HepG2 (cell line): ENCODE measurements at regions of chr2 and their contacts with region 1.

Region 1: GRCh38 chr2:42859006-42859552 is 66.7 kb upstream of the HAAO start:
- DNase-seq: peak; percentile 81
- ATAC-seq: no peak
- H3K4me3 ChIP-seq: no peak overlapping the region
- H3K27ac ChIP-seq: no peak overlapping the region
- H3K4me1 ChIP-seq: peaks cover 26% of the 10 kb centered on the region
- H3K27me3 ChIP-seq: peaks cover 2 to 16% of the 10 kb centered on the region in 2 experiments; a peak in 2 of 5 replicates
- CTCF ChIP-seq: peak; percentile 91
- EP300 ChIP-seq: 0 out of 4 replicates have a peak, but pooled peaks of 1 of the 2 experiments have one; percentile 3
- POLR2A ChIP-seq: no peak
- RAD21 ChIP-seq: peak; percentile 88

Region 2: GRCh38 chr2:42095923-42096408 is 763.1 kb before region 1 on chr2:
- CTCF ChIA-PET with region 1: no interaction called
- POLR2A ChIA-PET with region 1: no interaction called
- in situ Hi-C with region 1: no loop called
- intact Hi-C with region 1: no loop called
- DNase-seq: peak; percentile 81
- ATAC-seq: peak; percentile 20
- H3K4me3 ChIP-seq: no peak overlapping the region
- H3K27ac ChIP-seq: peak overlapping the region; percentile 1
- H3K4me1 ChIP-seq: peaks cover 86% of the 10 kb centered on the region
- H3K27me3 ChIP-seq: no peaks in the 10 kb centered on the region
- CTCF ChIP-seq: peak; percentile 88
- EP300 ChIP-seq: 0 out of 4 replicates have a peak, but pooled peaks of 1 of the 2 experiments have one; percentile 58
- POLR2A ChIP-seq: no peak
- RAD21 ChIP-seq: peak; percentile 88

Region 3: GRCh38 chr2:42810121-42810970 is 48.7 kb before region 1 on chr2:
- CTCF ChIA-PET with region 1: no interaction called
- POLR2A ChIA-PET with region 1: interaction called, 12 read pairs
- in situ Hi-C with region 1: no loop called
- intact Hi-C with region 1: no loop called
- DNase-seq: peak; percentile 94
- ATAC-seq: peak; percentile 84
- H3K4me3 ChIP-seq: peak overlapping the region; percentile 79 to 93 (median 80)
- H3K27ac ChIP-seq: peak overlapping the region; percentile 98
- H3K4me1 ChIP-seq: peaks cover 19% of the 10 kb centered on the region
- H3K27me3 ChIP-seq: no peaks in the 10 kb centered on the region; a peak in 2 of 5 replicates
- CTCF ChIP-seq: 0 out of 2 replicates have a peak, but pooled peaks have one; percentile 31
- EP300 ChIP-seq: peak; percentile 34 to 36; a peak in 2 of 4 replicates
- POLR2A ChIP-seq: peak; percentile 82 to 95
- RAD21 ChIP-seq: peak; percentile 52; the same call in 1 of the 2 replicates

Region 4: DNA sequence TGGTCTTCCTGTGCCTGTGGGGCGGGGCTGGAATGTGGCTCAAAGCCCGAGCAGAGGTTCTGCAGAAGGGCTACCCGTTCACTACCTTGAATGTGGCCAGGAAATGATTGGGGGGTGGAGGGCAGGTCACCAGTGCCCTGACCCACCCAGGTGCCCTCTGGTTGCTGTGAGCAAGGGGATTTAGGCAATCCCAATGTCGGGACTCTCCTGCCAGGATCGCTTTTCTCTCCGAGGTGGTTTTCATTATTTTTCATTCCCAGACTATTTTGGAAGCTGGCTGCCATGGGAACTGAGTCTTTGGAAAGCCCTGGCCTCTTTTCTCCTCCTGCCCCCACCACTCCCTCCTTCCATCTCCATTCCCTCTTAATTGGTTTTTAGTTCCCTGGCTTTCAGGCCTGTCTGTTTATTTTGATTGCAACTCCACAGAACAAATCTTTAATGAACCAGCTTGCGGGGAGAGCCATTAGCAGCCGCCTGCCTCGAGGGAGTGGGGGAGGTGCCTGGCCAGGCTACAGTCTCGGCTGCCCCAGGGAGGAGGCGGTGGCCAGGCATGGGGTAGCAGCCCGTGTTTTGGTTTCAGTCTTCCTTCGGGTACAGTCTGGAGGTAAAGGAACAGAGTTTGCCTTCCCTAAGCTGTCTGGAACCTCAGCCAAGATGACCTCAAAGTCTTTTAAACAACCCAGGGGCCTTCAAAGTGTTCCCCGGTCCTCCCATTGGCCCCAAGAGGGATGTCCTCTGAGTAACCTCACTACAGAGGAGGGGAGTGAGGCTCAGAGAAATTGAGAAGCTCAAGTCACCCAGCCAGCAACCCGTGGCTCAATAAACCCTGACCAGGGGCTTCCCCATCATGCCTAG is 47.7 kb after region 1 on chr2:
- CTCF ChIA-PET with region 1: no interaction called
- POLR2A ChIA-PET with region 1: interaction called, 6 read pairs
- in situ Hi-C with region 1: no loop called
- intact Hi-C with region 1: loop called (anchors 1 kb)
- DNase-seq: no peak
- ATAC-seq: peak; percentile 74
- H3K4me3 ChIP-seq: peak overlapping the region; percentile 49 to 62 (median 51)
- H3K27ac ChIP-seq: no peak overlapping the region
- H3K4me1 ChIP-seq: peaks cover 41% of the 10 kb centered on the region
- H3K27me3 ChIP-seq: peaks cover 9 to 69% of the 10 kb centered on the region in 2 experiments; a peak in 4 of 5 replicates
- CTCF ChIP-seq: no peak
- EP300 ChIP-seq: no peak
- POLR2A ChIP-seq: no peak
- RAD21 ChIP-seq: no peak

Region 5: DNA sequence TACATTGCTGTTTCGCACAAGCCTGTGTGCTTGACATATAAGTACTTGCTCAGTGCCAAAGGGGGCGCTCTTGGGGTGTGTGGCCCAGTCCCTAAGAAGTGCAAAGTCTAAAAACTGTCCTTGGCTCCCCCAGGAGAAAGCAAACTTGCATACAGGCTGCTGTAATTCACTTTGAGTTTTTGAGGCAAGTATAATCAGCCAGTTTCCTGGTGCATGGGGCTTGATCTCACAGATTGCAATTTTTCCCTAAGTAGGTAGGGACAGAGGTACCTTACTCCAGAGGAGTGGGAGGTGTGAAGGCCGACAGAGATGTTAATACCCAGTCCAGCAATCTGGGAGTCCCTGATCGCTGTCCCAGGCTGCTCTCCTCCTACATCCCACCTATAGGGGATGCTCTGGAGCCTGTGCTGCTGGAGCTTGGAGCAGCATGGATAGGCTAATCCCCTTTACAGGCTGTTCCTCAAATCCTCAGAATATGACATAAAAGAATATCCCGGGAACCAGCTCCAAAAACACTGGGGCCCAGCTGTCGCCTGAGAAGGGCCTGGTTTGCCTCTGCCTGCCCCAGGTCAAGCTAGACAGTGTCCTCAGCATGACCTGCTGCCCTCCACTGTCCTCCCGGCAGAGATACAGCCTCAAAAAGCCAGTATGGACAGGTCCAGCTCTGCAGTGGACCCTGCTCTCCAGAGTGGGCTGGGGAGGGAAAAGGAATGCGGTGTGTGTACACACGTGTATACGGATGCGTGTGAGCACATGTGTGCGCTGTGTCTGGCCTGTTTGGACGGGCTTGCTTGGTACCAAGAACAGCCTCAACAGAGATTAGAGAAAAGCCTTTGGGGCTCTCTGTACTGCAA is 69.8 kb after region 1 on chr2:
- CTCF ChIA-PET with region 1: interaction called, 6 read pairs
- POLR2A ChIA-PET with region 1: interaction called, 13 read pairs
- in situ Hi-C with region 1: loop called (anchors 5 kb)
- intact Hi-C with region 1: loop called (anchors 2 kb)
- DNase-seq: peak; percentile 90
- ATAC-seq: peak; percentile 54
- H3K4me3 ChIP-seq: peak overlapping the region; percentile 52 to 74 (median 62)
- H3K27ac ChIP-seq: peak overlapping the region; percentile 88
- H3K4me1 ChIP-seq: peaks cover 98% of the 10 kb centered on the region
- H3K27me3 ChIP-seq: no peaks in the 10 kb centered on the region
- CTCF ChIP-seq: peak; percentile 78
- EP300 ChIP-seq: peak in 1 of 2 experiments; percentile 70; a peak in 1 of 4 replicates
- POLR2A ChIP-seq: no peak
- RAD21 ChIP-seq: no peak

Region 6: DNA sequence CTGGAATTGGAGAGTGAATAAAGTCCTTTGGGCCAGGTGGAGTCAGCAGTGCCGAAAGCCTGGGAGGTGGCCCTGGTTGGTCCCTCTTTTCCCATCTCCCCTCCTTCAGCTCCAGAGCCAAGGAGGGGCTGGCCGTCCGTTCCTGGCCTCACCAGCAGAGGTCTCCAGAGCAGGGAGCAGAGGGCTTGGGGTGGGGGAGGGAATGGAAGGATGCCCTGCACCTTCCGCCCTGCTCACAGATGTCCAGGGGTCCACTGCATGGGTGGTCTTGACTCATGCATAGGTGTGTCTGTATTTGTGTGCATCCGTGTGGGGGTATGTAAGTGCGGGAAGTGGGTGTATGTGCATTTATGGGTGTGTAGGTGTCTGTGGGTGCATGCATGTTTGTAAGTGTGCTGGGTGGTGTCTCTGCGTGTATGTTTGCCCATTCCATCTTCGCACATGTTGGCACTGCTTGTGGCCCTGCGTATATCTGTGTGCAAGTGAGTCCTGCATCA is 165.5 kb after region 1 on chr2:
- CTCF ChIA-PET with region 1: interaction called, 4 read pairs
- POLR2A ChIA-PET with region 1: no interaction called
- in situ Hi-C with region 1: loop called (anchors 10 kb)
- intact Hi-C with region 1: no loop called
- DNase-seq: no peak
- ATAC-seq: peak; percentile 83
- H3K4me3 ChIP-seq: no peak overlapping the region
- H3K27ac ChIP-seq: no peak overlapping the region
- H3K4me1 ChIP-seq: peaks cover 60% of the 10 kb centered on the region
- H3K27me3 ChIP-seq: no peaks in the 10 kb centered on the region
- CTCF ChIP-seq: peak; percentile 98
- EP300 ChIP-seq: peak in 1 of 2 experiments; percentile 19; a peak in 1 of 4 replicates
- POLR2A ChIP-seq: no peak
- RAD21 ChIP-seq: peak; percentile 94

Region 7: DNA sequence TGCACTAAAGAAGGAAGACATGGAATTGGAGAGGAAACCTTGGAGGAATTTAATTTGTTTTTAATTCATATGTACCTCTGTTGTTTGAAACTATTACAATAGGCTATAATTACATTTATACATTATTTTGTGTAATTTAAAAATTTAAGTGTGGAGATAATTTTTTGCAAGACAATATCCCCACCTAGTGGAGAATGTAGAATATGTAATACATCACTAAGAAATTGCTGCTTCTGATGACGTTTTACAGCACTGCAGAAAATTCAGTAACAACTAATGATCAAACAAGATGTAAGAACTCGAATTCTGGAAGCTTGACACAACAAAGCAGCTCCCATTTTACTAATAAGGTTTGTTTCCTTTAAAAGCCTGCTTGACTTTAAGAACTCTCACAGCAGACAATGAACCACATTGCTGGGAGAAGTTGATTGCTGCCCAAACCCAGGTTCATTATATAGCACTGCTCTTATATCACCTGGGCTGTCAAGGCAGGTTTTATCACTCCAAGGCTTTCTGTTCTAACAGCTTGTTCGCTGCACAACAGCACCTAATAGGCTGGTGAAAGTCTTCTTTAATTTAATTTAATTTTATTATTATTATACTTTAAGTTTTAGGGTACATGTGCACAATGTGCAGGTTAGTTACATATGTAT is 683.3 kb after region 1 on chr2:
- CTCF ChIA-PET with region 1: interaction called, 8 read pairs
- POLR2A ChIA-PET with region 1: no interaction called
- in situ Hi-C with region 1: no loop called
- intact Hi-C with region 1: loop called (anchors 10 kb)
- DNase-seq: peak; percentile 54
- ATAC-seq: no peak
- H3K4me3 ChIP-seq: no peak overlapping the region
- H3K27ac ChIP-seq: no peak overlapping the region
- H3K4me1 ChIP-seq: peaks cover 11% of the 10 kb centered on the region
- H3K27me3 ChIP-seq: no peaks in the 10 kb centered on the region
- CTCF ChIP-seq: peak; percentile 67
- EP300 ChIP-seq: no peak
- POLR2A ChIP-seq: no peak
- RAD21 ChIP-seq: 0 out of 2 replicates have a peak, but pooled peaks have one; percentile 23